ENCODE measurements at regions of chr5 and their contacts with region 1.

Region 1: GRCh38 chr5:56845277-56845676 is 29.9 kb downstream of the MAP3K1 start:
- DNase-seq: peak; percentile 52
- ATAC-seq: peak; percentile 59
- H3K4me3 ChIP-seq: peak overlapping the region in 1 of 5 experiments; percentile 11
- H3K4me3 Mint-ChIP-seq: peak overlapping the region; percentile 49
- H3K27ac ChIP-seq: peak overlapping the region in 1 of 2 donors; percentile 85
- H3K27ac Mint-ChIP-seq: peak overlapping the region; percentile 73
- H3K4me1 ChIP-seq: peaks cover 82 to 98% of the 10 kb centered on the region in 2 donors
- H3K4me1 Mint-ChIP-seq: peaks cover 90% of the 10 kb centered on the region
- H3K27me3 ChIP-seq: no peaks in the 10 kb centered on the region
- H3K27me3 Mint-ChIP-seq: no peaks in the 10 kb centered on the region
- CTCF ChIP-seq: no peak

Region 2: DNA sequence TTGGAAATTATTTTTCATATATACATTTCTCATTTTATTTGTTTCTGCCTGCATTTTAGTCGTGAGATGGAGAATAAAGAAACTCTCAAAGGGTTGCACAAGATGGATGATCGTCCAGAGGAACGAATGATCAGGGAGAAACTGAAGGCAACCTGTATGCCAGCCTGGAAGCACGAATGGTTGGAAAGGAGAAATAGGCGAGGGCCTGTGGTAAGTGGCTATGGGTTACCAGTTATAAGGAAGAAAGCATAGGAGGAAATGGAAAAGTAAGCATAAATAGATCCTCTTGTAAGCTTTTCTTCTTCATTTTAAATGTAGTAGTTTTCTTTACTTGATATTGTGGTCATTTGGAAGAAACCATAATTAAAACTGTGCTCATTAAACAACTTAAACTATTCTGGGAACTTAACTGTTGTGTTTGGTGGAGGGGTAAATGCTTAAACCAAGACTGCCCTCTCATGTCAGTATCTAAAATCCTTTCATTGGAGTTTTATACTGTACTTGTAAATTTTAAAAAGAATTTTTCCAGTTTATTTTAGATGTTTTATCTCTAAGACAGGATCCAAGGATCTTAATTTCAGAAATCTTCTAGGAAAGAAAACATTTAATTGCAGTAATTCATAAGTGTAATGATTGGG is 11.4 kb after region 1 on chr5:
- CTCF ChIA-PET with region 1: interaction called, 6 read pairs
- POLR2A ChIA-PET with region 1: interaction called, 7 read pairs
- intact Hi-C with region 1: loop called (anchors 1 kb)
- DNase-seq: no peak
- ATAC-seq: no peak
- H3K4me3 ChIP-seq: no peak overlapping the region
- H3K4me3 Mint-ChIP-seq: peak overlapping the region; percentile 48
- H3K27ac ChIP-seq: peak overlapping the region in 1 of 2 donors; percentile 84
- H3K27ac Mint-ChIP-seq: peak overlapping the region; percentile 68
- H3K4me1 ChIP-seq: peaks cover 34 to 53% of the 10 kb centered on the region in 2 donors
- H3K4me1 Mint-ChIP-seq: peaks cover 62% of the 10 kb centered on the region
- H3K27me3 ChIP-seq: no peaks in the 10 kb centered on the region
- H3K27me3 Mint-ChIP-seq: no peaks in the 10 kb centered on the region
- CTCF ChIP-seq: no peak